Uterus (tissue), 4 donors: ENCODE measurements at regions of chr17 and their contacts with region 1.

Region 1: GRCh38 chr17:21457051-21458026 is 81.2 kb downstream of the KCNJ12 start:
- DNase-seq: peak; percentile 82 to 89
- H3K4me3 ChIP-seq: no peak overlapping the region
- H3K27ac ChIP-seq: peak overlapping the region in 1 of 2 donors; percentile 49
- H3K4me1 ChIP-seq: no peaks in the 10 kb centered on the region
- H3K27me3 ChIP-seq: no peaks in the 10 kb centered on the region
- CTCF ChIP-seq: peak; percentile 86 to 96 (median 88)
- POLR2A ChIP-seq: no peak

Region 2: GRCh38 chr17:21358707-21359482 is 98.4 kb before region 1 on chr17:
- intact Hi-C with region 1: no loop called
- DNase-seq: no peak
- H3K4me3 ChIP-seq: no peak overlapping the region
- H3K27ac ChIP-seq: no peak overlapping the region
- H3K4me1 ChIP-seq: no peaks in the 10 kb centered on the region
- H3K27me3 ChIP-seq: no peaks in the 10 kb centered on the region
- CTCF ChIP-seq: no peak
- POLR2A ChIP-seq: no peak

Region 3: DNA sequence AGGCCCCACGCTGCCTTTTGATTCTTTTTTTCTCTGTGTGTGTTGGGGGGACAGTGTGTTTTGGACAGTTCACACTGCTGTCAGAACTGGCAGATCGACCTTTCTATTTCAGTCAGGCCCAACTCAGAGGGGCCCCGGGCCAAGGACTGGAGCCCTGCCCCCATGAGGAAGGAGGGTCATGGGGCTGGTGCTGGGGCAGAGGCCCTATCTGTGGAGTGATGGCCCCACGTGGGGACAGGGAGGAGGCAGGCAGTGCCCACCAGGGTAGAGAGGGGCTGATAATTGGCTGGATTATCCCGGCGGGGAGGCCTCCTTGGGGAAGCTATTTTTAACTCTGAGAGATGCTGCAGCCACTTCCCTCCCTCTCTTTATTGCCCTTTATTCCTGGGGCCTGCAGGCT is 86.9 kb before region 1 on chr17:
- intact Hi-C with region 1: no loop called
- DNase-seq: no peak
- H3K4me3 ChIP-seq: no peak overlapping the region
- H3K27ac ChIP-seq: no peak overlapping the region
- H3K4me1 ChIP-seq: no peaks in the 10 kb centered on the region
- H3K27me3 ChIP-seq: no peaks in the 10 kb centered on the region
- CTCF ChIP-seq: no peak
- POLR2A ChIP-seq: no peak

Region 4: DNA sequence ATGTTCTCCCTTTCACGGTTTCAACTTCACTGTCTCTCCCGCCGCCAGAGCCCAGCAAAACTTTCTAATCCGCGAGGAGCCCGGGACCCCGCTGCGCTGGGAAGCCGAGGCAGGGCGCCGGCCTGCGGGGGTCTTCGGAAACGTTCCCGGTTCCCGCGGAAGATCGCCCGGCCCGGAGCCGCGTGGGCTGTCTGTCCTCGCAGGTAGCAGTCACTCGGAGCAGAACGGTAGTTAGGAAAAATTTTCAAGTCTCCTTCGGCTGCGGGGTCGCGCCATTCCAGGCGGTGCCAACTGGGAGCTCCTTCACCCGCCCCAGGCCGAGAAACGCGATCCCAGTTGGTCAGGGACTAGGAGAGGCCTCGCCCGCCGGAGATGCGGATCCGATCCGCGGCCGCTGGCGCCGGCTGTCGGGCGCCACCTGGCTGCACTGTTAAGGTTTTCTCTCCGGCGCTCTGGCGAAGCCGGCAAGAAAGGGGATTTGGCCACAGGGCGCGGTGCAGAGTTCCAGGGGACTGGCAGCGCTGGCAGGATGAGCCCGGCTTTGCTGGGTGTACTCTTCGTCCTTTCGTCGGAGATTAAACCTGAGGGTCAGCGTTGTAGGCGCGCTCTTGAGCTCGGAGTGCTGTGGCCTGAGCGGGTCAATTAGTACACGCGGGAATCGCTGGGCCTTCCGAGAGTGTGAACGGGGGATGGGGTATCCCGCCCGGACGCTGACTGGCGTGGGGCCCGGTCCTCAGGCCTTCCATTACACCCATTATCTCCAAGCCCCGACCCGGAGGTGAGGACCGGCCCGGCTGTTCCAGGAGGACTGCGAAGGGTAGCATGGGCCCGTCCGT is 54.2 kb after region 1 on chr17:
- intact Hi-C with region 1: loop called (anchors 2 kb)
- DNase-seq: peak; percentile 75 to 84
- H3K4me3 ChIP-seq: peak overlapping the region; percentile 39 to 45
- H3K27ac ChIP-seq: peak overlapping the region; percentile 48 to 61
- H3K4me1 ChIP-seq: peaks cover 0 to 3% of the 10 kb centered on the region in 2 donors
- H3K27me3 ChIP-seq: no peaks in the 10 kb centered on the region
- CTCF ChIP-seq: peak; percentile 34 to 84 (median 80)
- POLR2A ChIP-seq: no peak

Region 5: DNA sequence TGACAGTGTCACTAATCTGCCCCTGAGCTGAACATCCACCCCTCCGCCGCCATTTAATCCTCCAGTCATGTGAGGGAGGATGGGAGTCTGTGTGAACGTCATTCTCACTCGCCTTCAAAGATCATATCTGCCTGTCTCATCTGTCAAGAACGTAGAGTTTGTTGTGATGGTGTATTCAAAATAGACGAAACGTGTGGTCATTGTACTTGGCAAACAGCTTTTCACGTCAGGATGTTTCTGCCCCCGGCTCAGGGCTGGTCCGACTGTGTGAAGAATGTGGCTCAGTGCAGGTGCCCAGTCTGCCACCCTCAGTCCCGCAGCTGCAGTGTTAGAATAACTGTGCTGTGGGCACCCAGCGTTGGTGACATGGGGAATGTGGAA is 66.9 kb after region 1 on chr17:
- intact Hi-C with region 1: no loop called
- DNase-seq: no peak
- H3K4me3 ChIP-seq: no peak overlapping the region
- H3K27ac ChIP-seq: no peak overlapping the region
- H3K4me1 ChIP-seq: no peaks in the 10 kb centered on the region
- H3K27me3 ChIP-seq: no peaks in the 10 kb centered on the region
- CTCF ChIP-seq: no peak
- POLR2A ChIP-seq: no peak